ENCODE measurements at regions of chr17 and their contacts with region 1.

Region 1: DNA sequence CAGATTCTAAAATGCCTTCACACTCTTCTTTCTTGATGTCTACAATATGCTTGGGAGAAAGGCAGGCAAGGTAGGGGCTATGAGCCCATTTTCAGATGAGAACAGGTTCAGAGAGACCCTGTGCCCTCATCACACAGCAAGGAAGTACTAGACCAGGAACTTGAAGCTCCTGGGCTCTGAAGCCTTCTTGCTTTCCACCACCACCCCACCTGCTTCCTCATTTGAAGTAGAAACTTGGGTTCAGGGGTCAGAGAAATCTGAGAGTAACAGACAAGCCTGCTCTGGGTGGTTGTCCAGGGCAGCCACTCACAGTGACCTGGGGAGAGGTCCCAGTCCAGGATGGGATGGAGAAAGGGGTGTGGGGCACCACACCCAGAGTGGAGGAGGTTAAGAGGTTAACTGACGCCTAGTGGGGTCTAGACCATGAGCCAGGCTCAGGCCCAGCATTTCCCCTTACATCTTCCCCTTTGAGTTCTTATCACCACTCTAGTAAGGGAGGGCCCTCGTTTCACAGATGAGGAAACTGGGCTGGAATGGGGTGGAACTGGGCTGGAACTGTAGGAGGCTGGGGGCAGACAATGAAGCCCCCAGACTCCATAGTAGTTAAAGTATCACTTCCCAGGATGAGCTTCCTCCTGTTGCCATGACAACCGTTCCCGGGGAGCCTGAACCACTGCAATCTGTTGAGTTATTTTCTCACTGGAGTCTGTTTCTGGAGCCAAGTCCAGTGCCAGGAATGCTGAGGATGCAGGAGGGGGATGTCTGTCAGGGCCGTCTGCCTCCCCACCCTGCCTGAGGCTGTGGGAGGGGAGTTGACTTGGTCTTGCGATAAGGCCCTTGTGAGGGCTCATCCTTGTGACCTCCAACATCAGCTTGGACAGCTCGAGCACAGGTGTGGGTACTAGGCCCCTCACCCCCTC is 16.2 kb upstream of the PHF12 start:
- DNase-seq: peak in 1 of 5 donors; percentile 25
- H3K4me3 ChIP-seq: no peak overlapping the region
- H3K4me3 Mint-ChIP-seq: no peak overlapping the region
- H3K27ac ChIP-seq: no peak overlapping the region
- H3K27ac Mint-ChIP-seq: peak overlapping the region in 2 of 7 donors; percentile 19 to 39
- H3K4me1 ChIP-seq: no peaks in the 10 kb centered on the region
- H3K4me1 Mint-ChIP-seq: peaks cover 0 to 3% (median 0%) of the 10 kb centered on the region in 4 donors
- H3K27me3 ChIP-seq: no peaks in the 10 kb centered on the region
- H3K27me3 Mint-ChIP-seq: peaks cover 8 to 14% of the 10 kb centered on the region in 2 donors

Region 2: DNA sequence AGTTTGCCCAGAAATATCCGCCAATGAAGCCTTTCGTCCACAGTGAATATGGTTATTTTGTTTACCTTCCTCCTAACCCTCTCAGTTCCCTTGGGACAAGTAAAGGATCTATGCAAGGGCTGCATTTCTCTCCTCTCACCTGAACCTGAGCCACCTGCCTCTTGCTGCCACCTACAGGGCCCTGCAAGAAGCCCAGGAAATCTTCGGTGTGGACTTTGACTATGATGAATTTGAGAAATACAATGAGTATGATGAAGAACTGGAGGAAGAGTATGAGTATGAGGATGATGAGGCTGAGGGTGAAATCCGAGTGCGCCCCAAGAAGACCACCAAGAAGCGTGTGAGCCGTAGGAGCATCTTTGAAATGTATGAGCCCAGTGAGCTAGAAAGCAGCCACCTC is 291.5 kb before region 1 on chr17:
- CTCF ChIA-PET with region 1: no interaction called
- POLR2A ChIA-PET with region 1: no interaction called
- intact Hi-C with region 1: no loop called
- DNase-seq: peak in 1 of 5 donors; percentile 8
- H3K4me3 ChIP-seq: no peak overlapping the region
- H3K4me3 Mint-ChIP-seq: no peak overlapping the region
- H3K27ac ChIP-seq: no peak overlapping the region
- H3K27ac Mint-ChIP-seq: peak overlapping the region in 3 of 7 donors; percentile 11 to 29 (median 26)
- H3K4me1 ChIP-seq: no peaks in the 10 kb centered on the region
- H3K4me1 Mint-ChIP-seq: no peaks in the 10 kb centered on the region
- H3K27me3 ChIP-seq: no peaks in the 10 kb centered on the region
- H3K27me3 Mint-ChIP-seq: no peaks in the 10 kb centered on the region

Region 3: DNA sequence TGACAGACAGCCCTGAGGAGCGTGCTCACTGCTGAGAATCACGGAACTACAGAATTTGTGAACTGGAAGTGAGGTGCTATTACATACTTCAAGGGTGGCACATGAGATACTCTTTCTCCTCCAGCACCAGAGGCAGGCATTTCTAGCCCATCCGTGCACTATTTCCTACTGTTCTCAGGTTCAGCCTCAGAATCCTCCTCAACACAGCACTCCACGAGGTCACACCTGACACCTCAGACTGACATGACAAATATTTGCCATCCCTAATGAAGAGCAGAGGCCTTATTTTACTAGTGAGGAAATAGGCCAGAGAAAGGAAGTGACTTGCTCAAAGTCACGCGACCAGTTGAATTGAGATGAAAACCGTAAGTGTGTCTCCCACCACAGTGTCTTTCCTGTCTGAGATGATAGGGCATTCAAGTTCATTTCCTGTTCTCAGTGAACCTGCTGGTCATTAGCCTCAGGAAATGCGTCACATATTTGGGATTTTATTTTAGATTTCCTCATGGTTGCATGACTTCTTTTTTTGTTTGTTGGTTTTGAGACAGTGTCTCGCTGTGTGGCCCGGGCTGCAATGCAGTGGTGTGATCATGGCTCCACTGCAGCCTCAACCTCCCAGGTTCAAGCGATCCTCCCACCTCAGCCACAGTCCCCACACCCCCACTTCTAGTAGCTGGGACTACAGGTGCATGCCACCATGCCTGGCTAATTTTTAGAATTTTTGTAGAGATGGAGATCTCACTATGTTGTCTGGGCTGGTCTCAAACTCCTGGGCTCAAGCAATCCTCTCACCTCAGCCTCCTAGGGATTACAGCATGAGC is 14.9 kb after region 1 on chr17:
- CTCF ChIA-PET with region 1: interaction called, 22 read pairs
- POLR2A ChIA-PET with region 1: no interaction called
- intact Hi-C with region 1: no loop called
- DNase-seq: peak; percentile 74 to 88 (median 80)
- H3K4me3 ChIP-seq: no peak overlapping the region
- H3K4me3 Mint-ChIP-seq: peak overlapping the region in 7 of 8 donors; percentile 50 to 83 (median 67)
- H3K27ac ChIP-seq: peak overlapping the region; percentile 48
- H3K27ac Mint-ChIP-seq: peak overlapping the region; percentile 93 to 98 (median 98)
- H3K4me1 ChIP-seq: peaks cover 26% of the 10 kb centered on the region
- H3K4me1 Mint-ChIP-seq: peaks cover 18 to 27% (median 20%) of the 10 kb centered on the region in 4 donors
- H3K27me3 ChIP-seq: no peaks in the 10 kb centered on the region
- H3K27me3 Mint-ChIP-seq: peaks cover 0 to 1% of the 10 kb centered on the region in 2 donors

Region 4: DNA sequence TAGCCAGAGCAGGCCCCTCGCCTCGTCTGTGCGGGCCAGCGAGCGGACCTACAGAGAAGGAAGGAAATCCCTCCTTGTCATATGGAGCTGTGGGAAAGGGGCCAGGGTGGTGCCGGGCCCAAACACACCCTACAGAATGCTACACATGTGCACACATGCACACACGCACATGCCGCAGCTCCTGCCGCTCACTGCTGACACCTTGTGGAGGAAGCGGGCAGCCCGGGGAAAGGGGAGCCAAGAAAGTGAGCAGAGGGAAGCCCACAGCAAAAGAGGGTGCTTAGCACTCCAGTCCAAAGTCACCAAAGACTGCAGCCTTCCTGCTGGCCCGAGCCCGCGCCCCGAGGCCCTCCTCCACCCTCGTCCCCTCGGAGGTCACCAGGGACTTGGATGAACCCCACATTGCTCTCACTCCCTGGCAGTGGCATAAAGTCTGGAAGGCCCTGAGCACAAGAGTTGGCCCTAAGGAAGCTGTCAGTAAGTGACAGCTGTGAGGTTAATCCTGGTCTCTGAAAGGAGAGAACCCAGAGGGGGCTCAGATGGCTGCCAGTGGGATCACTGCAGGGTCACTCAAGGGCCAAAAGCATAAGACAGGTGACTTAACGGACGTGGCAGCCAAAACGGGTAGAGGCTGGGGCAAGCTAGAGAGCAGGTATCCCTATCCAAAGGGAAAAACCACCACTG is 144.5 kb after region 1 on chr17:
- CTCF ChIA-PET with region 1: interaction called, 318 read pairs
- POLR2A ChIA-PET with region 1: interaction called, 14 read pairs
- intact Hi-C with region 1: loop called (anchors 1 kb)
- DNase-seq: peak; percentile 45 to 63 (median 55)
- H3K4me3 ChIP-seq: no peak overlapping the region
- H3K4me3 Mint-ChIP-seq: no peak overlapping the region
- H3K27ac ChIP-seq: no peak overlapping the region
- H3K27ac Mint-ChIP-seq: peak overlapping the region in 3 of 7 donors; percentile 8 to 70 (median 23)
- H3K4me1 ChIP-seq: peaks cover 2% of the 10 kb centered on the region
- H3K4me1 Mint-ChIP-seq: peaks cover 2 to 6% (median 5%) of the 10 kb centered on the region in 4 donors
- H3K27me3 ChIP-seq: no peaks in the 10 kb centered on the region
- H3K27me3 Mint-ChIP-seq: no peaks in the 10 kb centered on the region

Region 5: DNA sequence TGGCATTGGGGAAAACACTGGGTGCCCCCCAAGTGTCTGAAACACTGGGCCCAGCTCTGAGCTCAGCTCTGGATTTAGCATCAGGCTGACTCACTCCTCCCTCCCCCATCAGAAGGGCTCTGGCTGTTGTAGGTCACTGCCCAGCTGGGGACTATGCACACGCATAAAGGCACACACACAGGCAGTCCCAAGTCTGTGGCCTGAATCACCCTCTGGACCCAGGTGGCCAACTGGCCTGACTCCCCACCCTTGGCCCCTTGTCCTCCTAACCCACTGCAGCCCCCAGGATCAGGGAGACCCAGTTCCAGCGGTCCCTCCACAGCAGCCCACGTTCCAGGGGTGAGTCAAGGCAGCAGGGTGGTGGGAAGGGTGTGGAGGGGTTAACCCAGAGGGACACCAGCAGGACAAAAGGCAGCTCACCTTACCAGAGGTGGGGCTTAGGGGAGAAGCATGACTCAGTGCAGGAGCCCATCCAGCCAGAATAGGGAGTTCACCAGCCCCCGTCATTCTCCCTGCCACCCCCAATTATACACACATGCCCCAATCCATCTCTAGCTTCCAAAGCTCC is 165.7 kb after region 1 on chr17:
- CTCF ChIA-PET with region 1: interaction called, 11 read pairs
- POLR2A ChIA-PET with region 1: no interaction called
- intact Hi-C with region 1: no loop called
- DNase-seq: no peak
- H3K4me3 ChIP-seq: no peak overlapping the region
- H3K4me3 Mint-ChIP-seq: no peak overlapping the region
- H3K27ac ChIP-seq: no peak overlapping the region
- H3K27ac Mint-ChIP-seq: peak overlapping the region in 3 of 7 donors; percentile 30 to 53 (median 46)
- H3K4me1 ChIP-seq: peaks cover 62% of the 10 kb centered on the region
- H3K4me1 Mint-ChIP-seq: peaks cover 30 to 72% (median 43%) of the 10 kb centered on the region in 4 donors
- H3K27me3 ChIP-seq: no peaks in the 10 kb centered on the region
- H3K27me3 Mint-ChIP-seq: no peaks in the 10 kb centered on the region